ENCODE measurements at regions of chr19 and their contacts with region 1.

Region 1: GRCh38 chr19:43723588-43723987 is 7.7 kb downstream of the IRGC start:
- DNase-seq: no peak
- ATAC-seq: no peak
- H3K4me3 ChIP-seq: no peak overlapping the region
- H3K27ac ChIP-seq: no peak overlapping the region
- H3K4me1 ChIP-seq: peaks cover 0 to 25% (median 11%) of the 10 kb centered on the region in 9 donors
- H3K27me3 ChIP-seq: no peaks in the 10 kb centered on the region
- CTCF ChIP-seq: peak in 5 of 9 donors; percentile 13 to 49 (median 22)

Region 2: GRCh38 chr19:43675269-43675879 is 48.2 kb before region 1 on chr19:
- intact Hi-C with region 1: loop called in 1 of 10 experiments (anchors 10 kb)
- DNase-seq: no peak
- ATAC-seq: no peak
- H3K4me3 ChIP-seq: no peak overlapping the region
- H3K27ac ChIP-seq: peak overlapping the region in 2 of 10 donors; percentile 74 to 87
- H3K4me1 ChIP-seq: peaks cover 0 to 47% (median 3%) of the 10 kb centered on the region in 9 donors
- H3K27me3 ChIP-seq: no peaks in the 10 kb centered on the region
- CTCF ChIP-seq: no peak

Region 3: DNA sequence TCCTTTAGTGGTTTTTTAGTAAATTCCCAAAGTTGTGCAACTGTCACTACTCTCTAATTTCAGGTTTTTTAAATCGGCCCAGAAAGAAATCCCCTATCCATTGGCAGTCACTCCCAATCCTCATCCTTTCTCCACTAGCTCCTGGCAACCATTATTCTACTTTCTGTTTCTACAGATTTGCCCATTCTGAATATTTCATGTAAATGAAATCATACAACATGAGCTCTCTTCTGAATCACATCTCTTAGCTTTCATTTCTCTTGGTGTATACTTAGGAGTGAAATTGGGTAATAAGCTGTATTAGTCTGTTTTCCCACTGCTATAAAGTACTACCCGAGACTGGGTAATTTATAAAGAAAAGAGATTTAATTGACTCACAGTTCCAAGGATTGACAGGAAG is 318.6 kb after region 1 on chr19:
- intact Hi-C with region 1: no loop called
- DNase-seq: no peak
- ATAC-seq: no peak
- H3K4me3 ChIP-seq: no peak overlapping the region
- H3K27ac ChIP-seq: no peak overlapping the region
- H3K4me1 ChIP-seq: no peaks in the 10 kb centered on the region
- H3K27me3 ChIP-seq: peaks cover 0 to 31% (median 5%) of the 10 kb centered on the region in 7 donors
- CTCF ChIP-seq: no peak

Measured in heart right ventricle (tissue), 16 donors.